Prostate gland (tissue), 2 donors: ENCODE measurements at regions of chr17 and their contacts with region 1.

Region 1: GRCh38 chr17:27654654-27655524 is 23.9 kb downstream of the LGALS9 start:
- DNase-seq: peak; percentile 36
- H3K4me3 ChIP-seq: no peak overlapping the region
- H3K27ac ChIP-seq: no peak overlapping the region
- H3K4me1 ChIP-seq: no peaks in the 10 kb centered on the region
- H3K27me3 ChIP-seq: no peaks in the 10 kb centered on the region
- CTCF ChIP-seq: peak; percentile 79 to 91 (median 83)
- POLR2A ChIP-seq: no peak

Region 2: DNA sequence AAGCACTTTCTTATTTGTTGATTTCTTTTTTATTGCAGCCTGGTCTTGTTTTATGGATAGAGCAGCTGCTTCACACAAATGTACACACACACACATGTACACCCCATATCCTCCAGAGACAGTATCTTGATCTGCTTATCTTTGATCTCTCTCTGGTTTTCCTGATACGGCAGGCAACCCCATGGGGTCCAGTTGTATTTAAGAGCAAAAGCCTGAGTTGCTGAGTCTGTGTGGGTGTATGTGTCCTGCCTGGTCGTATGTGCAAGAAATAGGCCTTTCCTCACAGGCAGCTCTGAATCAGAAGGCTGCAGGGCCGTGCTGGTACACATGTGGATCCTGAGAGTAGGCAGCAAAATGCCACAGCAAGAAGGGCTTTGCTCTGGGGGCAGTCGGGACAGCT is 38.5 kb before region 1 on chr17:
- intact Hi-C with region 1: no loop called
- DNase-seq: no peak
- H3K4me3 ChIP-seq: no peak overlapping the region
- H3K27ac ChIP-seq: no peak overlapping the region
- H3K4me1 ChIP-seq: no peaks in the 10 kb centered on the region
- H3K27me3 ChIP-seq: no peaks in the 10 kb centered on the region
- CTCF ChIP-seq: no peak
- POLR2A ChIP-seq: no peak

Region 3: DNA sequence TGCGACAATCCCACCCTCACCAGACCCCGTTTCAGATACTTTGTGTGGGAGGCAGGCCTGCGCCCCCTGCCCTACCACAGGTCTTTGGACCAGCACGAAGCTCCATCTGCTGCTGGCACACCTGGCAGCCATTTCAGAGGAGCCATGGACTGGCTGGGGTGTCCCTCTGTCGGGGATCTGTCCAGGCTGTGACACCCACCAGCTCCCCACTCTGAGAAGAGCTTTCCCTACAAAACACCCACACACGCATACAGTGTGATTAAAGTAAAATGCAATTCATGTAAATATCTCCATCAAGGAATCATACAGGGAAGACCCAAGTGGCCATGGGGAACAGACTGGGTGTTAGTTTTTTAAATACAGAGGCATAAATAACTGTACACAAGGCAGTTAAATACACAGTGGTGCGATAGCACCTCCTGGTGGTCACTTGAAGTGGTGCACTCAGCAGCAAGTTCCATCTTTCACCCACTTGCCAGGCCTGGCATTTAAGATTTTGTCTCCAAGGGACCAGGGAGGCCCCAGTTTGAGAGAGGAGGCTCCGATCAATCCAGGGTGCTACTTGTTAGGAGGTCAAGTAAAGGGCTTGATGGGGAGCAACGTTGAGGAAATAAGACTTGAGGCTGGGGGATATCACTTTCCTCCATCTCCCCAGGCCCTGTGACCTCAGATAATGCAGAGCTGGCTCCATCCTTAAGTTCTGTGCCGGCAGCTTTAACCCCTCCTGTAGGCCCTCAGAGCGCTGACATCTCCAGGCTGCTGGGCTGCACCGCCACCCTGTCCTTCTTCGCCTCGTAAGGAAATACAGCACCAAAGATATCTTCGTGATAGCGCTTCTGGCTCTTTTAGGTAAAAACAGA is 101.9 kb after region 1 on chr17:
- intact Hi-C with region 1: loop called (anchors 2 kb)
- DNase-seq: peak; percentile 27
- H3K4me3 ChIP-seq: no peak overlapping the region
- H3K27ac ChIP-seq: no peak overlapping the region
- H3K4me1 ChIP-seq: no peaks in the 10 kb centered on the region
- H3K27me3 ChIP-seq: no peaks in the 10 kb centered on the region
- CTCF ChIP-seq: peak; percentile 80 to 89 (median 82)
- POLR2A ChIP-seq: no peak